Activated T-helper 1 cell treated with anti-CD3 and anti-CD28 coated beads, Interleukin-12 subunit alpha, Interleukin-12 subunit beta, Interleukin-2, Interleukin-4 antibody, amounts not matched to agents 30 ng/mL and 10 ng/mL and 1 ng/mL, durations not matched to agents 14 hours and 24 hours and 36 hours (primary cell): ENCODE measurements at regions of chr1 and their contacts with region 1.

Region 1: GRCh38 chr1:29711582-29712283 is 475.4 kb downstream of the PTPRU start:
- DNase-seq: peak; percentile 48
- H3K4me3 Mint-ChIP-seq: peak overlapping the region; percentile 34
- H3K27ac Mint-ChIP-seq: peak overlapping the region; percentile 83
- H3K4me1 Mint-ChIP-seq: peaks cover 65% of the 10 kb centered on the region
- H3K27me3 Mint-ChIP-seq: no peaks in the 10 kb centered on the region

Region 2: DNA sequence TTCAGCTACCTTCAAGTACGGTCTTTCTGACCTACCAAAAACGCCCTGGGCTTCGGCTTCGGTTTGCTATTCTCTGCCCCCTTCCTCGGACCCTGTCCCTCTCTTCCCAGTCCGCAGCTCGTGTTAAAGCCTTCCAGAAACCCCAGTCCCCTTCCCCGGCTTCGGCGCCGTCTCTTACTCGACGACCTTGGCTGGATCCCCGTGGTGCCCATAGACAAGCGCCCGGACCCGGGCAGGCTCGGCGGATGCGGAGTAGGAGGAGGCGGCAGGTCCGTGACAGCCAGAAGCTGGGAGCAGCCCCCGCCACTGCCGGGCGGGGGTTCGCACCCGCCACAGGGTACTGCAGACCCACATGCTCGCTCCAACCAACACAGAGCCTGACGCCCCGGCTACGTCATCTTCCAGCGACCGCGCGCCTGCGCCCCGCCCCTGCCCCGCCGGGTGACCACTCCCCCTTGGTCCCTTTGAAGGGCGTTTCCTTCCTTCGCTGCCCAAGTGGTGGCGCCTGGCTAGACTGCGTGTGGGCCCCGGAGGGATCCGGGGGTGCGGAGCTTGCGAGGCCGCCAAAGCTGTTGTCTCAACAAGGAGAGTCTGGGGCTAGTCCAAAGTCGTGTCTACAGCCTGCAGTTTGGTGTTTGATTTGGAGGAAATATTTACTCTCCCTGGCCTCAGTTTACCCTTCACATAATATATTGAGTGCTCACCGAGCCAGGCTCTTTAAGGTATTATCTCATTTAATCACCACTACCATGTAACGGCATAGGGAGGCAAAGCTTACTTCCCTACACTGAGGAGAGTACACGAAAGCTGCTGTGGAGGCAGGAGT is 481.0 kb before region 1 on chr1 and contains the start of gene MECR:
- intact Hi-C with region 1: loop called (anchors 5 kb)
- DNase-seq: peak; percentile 95
- H3K4me3 Mint-ChIP-seq: peak within 1 kb of the TSS; percentile 94
- H3K27ac Mint-ChIP-seq: peak within 1 kb of the TSS; percentile 84
- H3K4me1 Mint-ChIP-seq: peaks cover 23% of the 10 kb centered on the region
- H3K27me3 Mint-ChIP-seq: peaks cover 15% of the 10 kb centered on the region
- total RNA-seq, gene MECR: 34.5 and 36.4 TPM in 2 replicates

Region 3: GRCh38 chr1:29249170-29249691 is 462.5 kb before region 1 on chr1:
- intact Hi-C with region 1: no loop called
- DNase-seq: no peak
- H3K4me3 Mint-ChIP-seq: no peak overlapping the region
- H3K27ac Mint-ChIP-seq: no peak overlapping the region
- H3K4me1 Mint-ChIP-seq: no peaks in the 10 kb centered on the region
- H3K27me3 Mint-ChIP-seq: peaks cover 3% of the 10 kb centered on the region

Region 4: GRCh38 chr1:29688471-29689365 is 23.0 kb before region 1 on chr1:
- intact Hi-C with region 1: loop called (anchors 1 kb)
- DNase-seq: peak; percentile 22
- H3K4me3 Mint-ChIP-seq: peak overlapping the region; percentile 60
- H3K27ac Mint-ChIP-seq: peak overlapping the region; percentile 85
- H3K4me1 Mint-ChIP-seq: peaks cover 54% of the 10 kb centered on the region
- H3K27me3 Mint-ChIP-seq: peaks cover 5% of the 10 kb centered on the region

Region 5: DNA sequence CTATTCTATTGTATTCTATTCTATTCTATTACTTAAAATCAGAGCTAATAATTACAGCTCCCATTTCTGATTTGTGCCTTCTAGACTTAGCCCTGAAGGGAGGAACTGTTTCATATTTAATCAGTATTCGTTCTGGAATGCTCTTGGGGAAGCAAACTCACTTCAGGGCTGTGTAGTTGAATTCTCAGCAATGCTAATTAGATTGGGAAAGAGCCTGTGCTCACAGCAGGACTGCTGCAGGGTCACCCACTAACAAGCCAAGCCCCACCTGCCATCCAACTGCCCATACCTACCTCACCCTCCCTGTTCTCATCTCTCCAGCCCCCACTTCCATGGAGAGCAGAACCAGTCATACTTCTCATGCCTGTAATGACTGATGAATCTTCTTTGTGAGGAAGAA is 11.2 kb before region 1 on chr1:
- intact Hi-C with region 1: no loop called
- DNase-seq: no peak
- H3K4me3 Mint-ChIP-seq: no peak overlapping the region
- H3K27ac Mint-ChIP-seq: no peak overlapping the region
- H3K4me1 Mint-ChIP-seq: peaks cover 5% of the 10 kb centered on the region
- H3K27me3 Mint-ChIP-seq: peaks cover 19% of the 10 kb centered on the region

Region 6: DNA sequence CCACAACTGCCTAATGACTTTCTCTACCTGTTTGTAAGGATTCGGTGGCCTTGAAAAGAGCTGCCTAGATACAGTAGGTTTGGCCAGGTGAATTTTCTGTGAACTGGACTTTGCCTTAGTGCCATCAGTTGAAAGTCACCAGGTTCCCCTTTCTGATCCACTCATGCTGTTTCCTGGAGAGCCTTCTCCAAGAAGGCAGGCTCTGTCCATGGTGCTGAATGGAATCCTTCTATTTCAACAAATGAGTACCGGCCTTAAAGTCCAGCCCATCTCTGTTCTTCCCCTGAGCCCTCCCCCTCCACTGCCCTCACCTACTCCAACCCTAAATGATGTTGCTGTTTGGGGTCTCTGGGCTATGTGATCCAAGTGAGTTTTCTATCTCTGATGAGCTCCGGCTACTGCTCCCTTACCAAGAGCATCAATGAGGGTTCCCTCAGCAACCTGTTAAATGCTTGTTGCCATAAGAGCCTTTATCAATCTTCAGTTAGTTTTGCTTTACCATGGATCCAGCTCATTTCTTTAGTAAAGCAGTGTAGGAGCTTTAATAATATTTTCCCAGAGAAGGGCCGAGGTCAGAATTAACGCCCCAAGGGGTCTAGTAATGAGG is 25.0 kb after region 1 on chr1:
- intact Hi-C with region 1: loop called (anchors 2 kb)
- DNase-seq: no peak
- H3K4me3 Mint-ChIP-seq: no peak overlapping the region
- H3K27ac Mint-ChIP-seq: no peak overlapping the region
- H3K4me1 Mint-ChIP-seq: peaks cover 13% of the 10 kb centered on the region
- H3K27me3 Mint-ChIP-seq: peaks cover 5% of the 10 kb centered on the region

Region 7: DNA sequence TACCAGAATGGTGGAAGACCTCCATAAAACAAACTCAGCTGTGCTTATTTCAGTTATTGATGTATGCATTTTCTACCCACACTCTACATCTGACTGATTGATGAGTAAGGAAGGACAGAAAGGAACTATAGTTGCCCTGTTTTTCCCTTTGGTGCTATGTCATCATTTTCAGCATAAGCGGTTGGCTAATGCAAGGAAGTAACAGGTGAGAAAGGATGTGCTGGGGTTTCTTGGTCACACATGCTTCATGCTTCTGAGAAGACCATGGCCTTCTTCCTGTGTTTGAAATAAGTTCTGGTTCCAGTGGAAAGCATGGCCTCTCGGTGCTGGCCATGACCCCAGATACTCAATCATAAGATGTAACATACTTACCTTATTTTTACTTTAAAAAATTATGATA is 65.8 kb after region 1 on chr1:
- intact Hi-C with region 1: loop called (anchors 1 kb)
- DNase-seq: peak; percentile 7
- H3K4me3 Mint-ChIP-seq: no peak overlapping the region
- H3K27ac Mint-ChIP-seq: peak overlapping the region; percentile 38
- H3K4me1 Mint-ChIP-seq: peaks cover 11% of the 10 kb centered on the region
- H3K27me3 Mint-ChIP-seq: peaks cover 6% of the 10 kb centered on the region

Region 8: GRCh38 chr1:29849038-29849750 is 137.5 kb after region 1 on chr1:
- intact Hi-C with region 1: loop called (anchors 1 kb)
- DNase-seq: peak; percentile 36
- H3K4me3 Mint-ChIP-seq: no peak overlapping the region
- H3K27ac Mint-ChIP-seq: no peak overlapping the region
- H3K4me1 Mint-ChIP-seq: peaks cover 7% of the 10 kb centered on the region
- H3K27me3 Mint-ChIP-seq: no peaks in the 10 kb centered on the region

Region 9: GRCh38 chr1:30540611-30541192 is 829.0 kb after region 1 on chr1:
- intact Hi-C with region 1: no loop called
- DNase-seq: no peak
- H3K4me3 Mint-ChIP-seq: no peak overlapping the region
- H3K27ac Mint-ChIP-seq: no peak overlapping the region
- H3K4me1 Mint-ChIP-seq: no peaks in the 10 kb centered on the region
- H3K27me3 Mint-ChIP-seq: peaks cover 2% of the 10 kb centered on the region

Region 10: DNA sequence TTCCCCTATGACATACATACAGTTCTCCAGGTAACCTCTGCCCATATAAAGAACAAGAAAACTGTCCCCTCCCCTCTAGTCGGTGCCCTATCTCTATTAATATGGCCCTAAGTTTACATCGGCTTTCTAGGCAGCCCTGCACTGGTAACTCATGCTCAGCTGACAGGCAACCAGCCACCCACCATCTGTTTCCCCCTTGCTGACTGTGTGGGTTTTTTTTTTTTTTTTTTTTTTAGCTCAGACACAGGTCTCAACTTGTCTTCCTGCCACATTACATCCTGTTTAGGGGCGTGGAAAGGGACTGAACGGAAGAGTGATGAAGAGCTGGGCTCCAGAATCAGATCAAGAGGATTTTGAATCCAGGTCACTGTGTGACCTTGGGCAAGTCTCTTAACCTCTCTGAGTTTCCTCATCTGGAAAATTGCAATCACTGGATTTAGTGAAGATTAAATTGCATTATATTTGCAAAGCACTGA is 1031.9 kb after region 1 on chr1:
- intact Hi-C with region 1: loop called (anchors 10 kb)
- DNase-seq: peak; percentile 68
- H3K4me3 Mint-ChIP-seq: peak overlapping the region; percentile 64
- H3K27ac Mint-ChIP-seq: peak overlapping the region; percentile 98
- H3K4me1 Mint-ChIP-seq: peaks cover 96% of the 10 kb centered on the region
- H3K27me3 Mint-ChIP-seq: no peaks in the 10 kb centered on the region